ENCODE measurements at regions of chr7 and their contacts with region 1.

Region 1: GRCh38 chr7:4549681-4550080 is 132.4 kb upstream of the FOXK1 start:
- DNase-seq: peak; percentile 82
- ATAC-seq: peak; percentile 96

Region 2: DNA sequence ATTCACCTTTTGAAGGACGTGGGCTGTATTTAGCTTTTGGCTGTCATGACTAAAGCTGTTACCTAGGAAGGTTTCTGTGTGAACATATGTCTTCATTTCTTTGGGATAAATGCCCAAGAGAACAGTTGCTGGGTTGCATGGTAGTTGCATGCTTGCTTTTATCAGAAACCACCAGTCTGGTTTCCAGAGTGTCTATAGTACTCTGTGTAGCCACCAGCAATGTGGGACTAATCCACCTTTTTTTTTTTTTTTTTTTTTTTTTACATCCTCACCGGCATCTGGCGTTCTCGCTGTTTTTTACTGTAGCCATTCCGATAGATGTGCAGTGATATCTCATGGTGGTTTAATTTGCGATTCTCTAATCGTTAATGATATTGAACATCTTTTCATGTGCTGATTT is 950.8 kb before region 1 on chr7:
- intact Hi-C with region 1: no loop called
- DNase-seq: no peak
- ATAC-seq: no peak

Region 3: DNA sequence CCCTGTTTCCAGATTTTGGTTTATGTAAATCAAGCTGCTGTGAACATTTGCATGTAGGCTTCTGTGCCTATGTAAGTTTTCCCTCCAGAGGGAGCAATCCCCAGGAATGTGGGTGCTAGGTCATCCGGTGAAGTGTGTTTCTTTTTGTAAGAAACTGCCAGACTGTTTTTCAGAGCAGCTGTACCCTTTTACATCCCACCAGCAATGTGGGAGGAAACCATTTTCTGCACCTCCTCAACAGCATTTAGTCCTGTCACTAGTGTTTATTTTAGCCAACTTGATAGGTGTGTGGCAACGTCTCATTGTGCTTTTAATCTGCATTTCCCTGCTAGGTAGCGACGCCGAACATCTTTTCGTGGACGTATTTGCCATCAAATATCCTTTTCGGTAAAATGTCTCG is 263.3 kb before region 1 on chr7:
- intact Hi-C with region 1: loop called (anchors 5 kb)
- DNase-seq: no peak
- ATAC-seq: no peak

Region 4: GRCh38 chr7:4610768-4611467 is 61.2 kb after region 1 on chr7:
- intact Hi-C with region 1: no loop called
- DNase-seq: peak; percentile 31
- ATAC-seq: peak; percentile 75